ENCODE measurements at regions of chr1 and their contacts with region 1.

Region 1: GRCh38 chr1:23916209-23917131 is 3.3 kb upstream of the CNR2 start:
- DNase-seq: peak; percentile 61
- ATAC-seq: peak; percentile 84 to 88

Region 2: GRCh38 chr1:23772049-23772853 is 144.2 kb before region 1 on chr1:
- intact Hi-C with region 1: loop called in 1 of 2 experiments (anchors 5 kb)
- DNase-seq: peak; percentile 88
- ATAC-seq: peak; percentile 86 to 88

Region 3: DNA sequence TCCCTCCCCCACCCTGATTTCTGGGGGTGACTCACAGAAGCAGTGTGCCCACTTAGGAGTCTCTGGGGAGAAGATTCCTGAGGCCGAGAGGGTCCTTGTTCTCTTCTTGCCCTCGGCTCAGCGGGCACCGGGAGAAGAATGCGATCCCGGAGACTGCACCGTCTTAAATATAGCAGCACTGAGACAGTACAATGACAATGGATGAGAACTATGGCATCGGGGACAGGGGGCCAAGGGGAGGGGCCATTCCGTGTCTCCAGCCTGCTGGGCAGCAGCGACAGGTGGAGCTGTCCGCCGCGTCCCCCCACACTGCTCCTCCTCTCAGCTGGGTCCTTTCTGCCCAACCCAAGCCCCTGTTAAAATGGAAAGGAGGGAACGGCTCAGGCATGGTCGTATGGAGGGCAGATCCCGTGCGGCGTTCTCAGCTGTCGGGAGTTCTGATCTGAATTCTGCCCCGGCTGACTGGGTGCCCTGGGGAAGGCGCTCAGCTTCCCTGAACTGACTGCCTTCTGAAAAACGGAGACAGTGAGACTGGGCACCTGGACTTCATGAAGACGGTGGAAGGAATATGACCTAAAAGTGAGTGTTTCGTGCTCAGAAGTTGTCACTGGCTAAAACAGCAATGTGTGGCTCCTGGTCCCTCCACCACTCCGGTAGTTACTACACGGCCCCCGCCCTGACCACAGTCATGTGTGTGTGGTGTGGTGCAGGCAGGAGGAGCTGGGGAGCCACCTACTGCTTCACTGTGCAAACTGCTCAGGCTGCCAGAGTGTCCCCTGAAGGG is 195.7 kb after region 1 on chr1 and contains the start of gene MYOM3:
- intact Hi-C with region 1: no loop called
- DNase-seq: peak; percentile 84
- ATAC-seq: peak; percentile 81 to 83
- total RNA-seq, gene MYOM3: 160 to 224 TPM